Transverse colon (tissue), 4 donors: ENCODE measurements at regions of chr2 and their contacts with region 1.

Region 1: DNA sequence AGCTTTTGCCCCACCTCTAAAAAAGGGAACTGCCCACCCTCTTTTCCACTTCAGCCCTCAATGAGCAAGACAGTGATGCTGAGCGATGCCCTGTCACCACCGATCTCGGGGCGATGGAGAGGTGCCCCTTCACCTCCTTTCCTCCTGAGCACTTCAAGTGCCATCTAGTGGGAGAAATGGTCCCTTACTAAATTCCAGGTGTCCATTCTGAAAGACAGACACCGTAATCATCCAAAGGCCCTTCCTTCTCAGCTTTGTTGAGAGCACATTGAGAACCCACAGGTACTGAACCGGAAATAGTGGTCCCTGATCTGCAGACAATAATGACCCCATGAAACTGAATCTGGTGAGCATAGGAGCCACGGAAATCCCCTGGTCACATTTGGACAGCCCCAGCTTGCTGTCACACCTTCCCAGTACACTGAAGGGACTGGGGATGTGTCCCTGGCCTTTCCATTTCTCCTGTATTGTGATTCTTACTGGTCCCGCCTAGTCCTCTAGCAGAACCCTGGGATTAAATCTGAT is 38.5 kb downstream of the KCTD18 start:
- DNase-seq: peak; percentile 28
- H3K4me3 ChIP-seq: no peak overlapping the region
- H3K27ac ChIP-seq: no peak overlapping the region
- H3K4me1 ChIP-seq: peaks cover 0 to 13% (median 0%) of the 10 kb centered on the region in 4 donors
- H3K27me3 ChIP-seq: no peaks in the 10 kb centered on the region
- CTCF ChIP-seq: peak; percentile 33 to 52 (median 42)
- EP300 ChIP-seq: no peak
- POLR2A ChIP-seq: no peak

Region 2: GRCh38 chr2:198883604-198884003 is 1587.8 kb before region 1 on chr2:
- in situ Hi-C with region 1: no loop called
- intact Hi-C with region 1: no loop called
- DNase-seq: no peak
- H3K4me3 ChIP-seq: no peak overlapping the region
- H3K27ac ChIP-seq: no peak overlapping the region
- H3K4me1 ChIP-seq: no peaks in the 10 kb centered on the region
- H3K27me3 ChIP-seq: no peaks in the 10 kb centered on the region
- CTCF ChIP-seq: no peak
- EP300 ChIP-seq: no peak
- POLR2A ChIP-seq: no peak

Region 3: DNA sequence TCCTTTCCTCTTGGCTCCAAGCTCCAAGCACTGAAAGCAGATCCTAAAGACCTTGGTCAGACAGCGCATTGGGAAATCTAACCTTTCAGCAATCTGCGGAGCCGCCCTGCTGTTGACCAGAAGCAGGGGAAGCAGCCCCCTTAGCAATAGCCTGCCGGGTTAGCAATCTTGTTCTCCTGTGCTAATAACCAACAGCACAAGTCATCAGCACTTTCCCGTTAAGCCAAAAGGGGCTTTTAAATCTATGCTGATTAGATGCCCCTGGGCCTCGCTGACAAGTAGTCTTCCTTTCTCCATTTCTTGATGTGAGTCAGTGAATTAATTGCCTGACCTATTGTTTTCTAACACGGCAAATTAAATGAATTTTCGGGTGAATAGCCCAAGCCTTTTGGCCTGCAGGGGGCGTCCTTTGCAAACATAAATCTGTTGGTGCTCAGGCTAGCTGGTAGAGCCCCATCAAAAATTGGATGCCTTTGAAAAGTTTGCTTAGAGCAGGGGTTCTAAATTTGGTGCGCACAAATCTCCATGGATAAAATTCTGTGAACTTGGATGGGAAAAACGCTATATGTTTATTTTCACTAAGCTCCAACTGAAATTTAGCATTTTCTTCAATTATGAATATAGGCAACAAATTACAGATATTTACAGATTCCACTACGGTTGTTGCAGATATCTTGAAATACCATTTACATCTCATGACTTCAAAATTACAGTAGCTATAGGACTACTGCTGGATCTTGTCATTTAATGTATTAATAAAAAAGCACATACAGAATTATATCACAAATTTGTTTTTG is 491.4 kb before region 1 on chr2:
- in situ Hi-C with region 1: loop called in 1 of 4 experiments (anchors 5 kb)
- intact Hi-C with region 1: loop called (anchors 5 kb)
- DNase-seq: peak; percentile 87
- H3K4me3 ChIP-seq: no peak overlapping the region
- H3K27ac ChIP-seq: no peak overlapping the region
- H3K4me1 ChIP-seq: peaks cover 0 to 20% (median 7%) of the 10 kb centered on the region in 4 donors
- H3K27me3 ChIP-seq: no peaks in the 10 kb centered on the region
- CTCF ChIP-seq: peak; percentile 88 to 92 (median 90)
- EP300 ChIP-seq: no peak
- POLR2A ChIP-seq: no peak

Region 4: DNA sequence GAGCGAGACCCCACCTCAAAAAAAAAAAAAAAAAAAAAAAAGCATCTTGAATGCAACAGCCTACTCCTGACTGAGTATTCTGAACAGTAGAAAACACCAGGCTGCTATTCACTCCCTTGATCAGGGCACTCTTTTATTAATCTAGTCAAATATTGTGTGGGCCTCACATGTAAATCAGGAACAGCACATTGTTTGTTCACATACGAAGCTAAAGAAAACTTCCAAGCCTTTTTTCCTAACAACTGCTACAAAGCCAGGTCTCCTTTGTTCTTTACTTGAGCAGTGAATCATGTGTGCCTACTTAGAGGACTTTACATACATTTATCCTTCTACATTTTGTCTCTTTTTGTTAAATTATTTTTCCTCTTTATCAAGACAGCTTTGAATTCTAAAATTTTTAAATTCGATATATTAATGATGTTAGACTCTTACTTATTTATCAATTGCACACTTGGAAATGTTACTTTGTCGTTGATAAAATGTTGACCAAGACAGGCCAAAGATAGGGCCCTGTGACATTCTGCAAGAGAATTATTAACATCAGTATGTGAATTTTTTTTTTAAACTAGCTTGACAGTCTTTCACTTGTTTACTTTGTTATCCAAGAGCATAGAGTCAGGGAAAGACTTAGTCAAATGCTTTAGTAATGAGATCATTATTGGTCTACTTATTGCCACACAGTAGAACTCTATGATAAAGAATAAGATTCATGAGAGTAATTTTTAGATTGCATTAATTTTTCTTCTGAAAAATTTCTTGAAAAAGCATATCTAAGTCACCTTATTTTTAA is 151.6 kb before region 1 on chr2:
- in situ Hi-C with region 1: loop called in 1 of 4 experiments (anchors 10 kb)
- intact Hi-C with region 1: no loop called
- DNase-seq: no peak
- H3K4me3 ChIP-seq: no peak overlapping the region
- H3K27ac ChIP-seq: peak overlapping the region in 2 of 4 donors; percentile 3 to 24
- H3K4me1 ChIP-seq: peaks cover 0 to 30% (median 2%) of the 10 kb centered on the region in 4 donors
- H3K27me3 ChIP-seq: no peaks in the 10 kb centered on the region
- CTCF ChIP-seq: no peak
- EP300 ChIP-seq: no peak
- POLR2A ChIP-seq: no peak

Region 5: GRCh38 chr2:200396781-200397242 is 74.6 kb before region 1 on chr2:
- in situ Hi-C with region 1: no loop called
- intact Hi-C with region 1: no loop called
- DNase-seq: no peak
- H3K4me3 ChIP-seq: no peak overlapping the region
- H3K27ac ChIP-seq: no peak overlapping the region
- H3K4me1 ChIP-seq: no peaks in the 10 kb centered on the region
- H3K27me3 ChIP-seq: no peaks in the 10 kb centered on the region
- CTCF ChIP-seq: no peak
- EP300 ChIP-seq: no peak
- POLR2A ChIP-seq: no peak